ENCODE measurements at regions of chr9 and their contacts with region 1.

Region 1: GRCh38 chr9:78601957-78602565 is 305.1 kb downstream of the PSAT1 start:
- DNase-seq: peak; percentile 66
- ATAC-seq: peak; percentile 81
- H3K4me3 ChIP-seq: no peak overlapping the region
- H3K27ac ChIP-seq: no peak overlapping the region
- H3K4me1 ChIP-seq: peaks cover 6% of the 10 kb centered on the region
- H3K27me3 ChIP-seq: no peaks in the 10 kb centered on the region
- CTCF ChIP-seq: peak; percentile 79
- POLR2A ChIP-seq: no peak
- RAD21 ChIP-seq: peak; percentile 86

Region 2: GRCh38 chr9:78439190-78439865 is 162.7 kb before region 1 on chr9:
- CTCF ChIA-PET with region 1: interaction called, 4 read pairs
- POLR2A ChIA-PET with region 1: no interaction called
- dilution Hi-C with region 1: no loop called
- in situ Hi-C with region 1: no loop called
- intact Hi-C with region 1: loop called (anchors 1 kb)
- DNase-seq: peak; percentile 89
- ATAC-seq: peak; percentile 97
- H3K4me3 ChIP-seq: peak overlapping the region; percentile 5; the same call in 1 of the 2 replicates
- H3K27ac ChIP-seq: no peak overlapping the region
- H3K4me1 ChIP-seq: no peaks in the 10 kb centered on the region
- H3K27me3 ChIP-seq: peaks cover 14% of the 10 kb centered on the region
- CTCF ChIP-seq: peak; percentile 95
- POLR2A ChIP-seq: peak; percentile 30; the same call in 1 of the 2 replicates
- RAD21 ChIP-seq: peak; percentile 97

Region 3: GRCh38 chr9:78866207-78867132 is 264.4 kb after region 1 on chr9:
- CTCF ChIA-PET with region 1: no interaction called
- POLR2A ChIA-PET with region 1: no interaction called
- dilution Hi-C with region 1: no loop called
- in situ Hi-C with region 1: no loop called
- intact Hi-C with region 1: loop called (anchors 5 kb)
- DNase-seq: peak; percentile 96
- ATAC-seq: peak; percentile 85
- H3K4me3 ChIP-seq: no peak overlapping the region
- H3K27ac ChIP-seq: peak overlapping the region; percentile 27
- H3K4me1 ChIP-seq: peaks cover 7% of the 10 kb centered on the region
- H3K27me3 ChIP-seq: no peaks in the 10 kb centered on the region
- CTCF ChIP-seq: no peak
- POLR2A ChIP-seq: no peak
- RAD21 ChIP-seq: no peak

Region 4: GRCh38 chr9:79195879-79196278 is 593.8 kb after region 1 on chr9:
- CTCF ChIA-PET with region 1: no interaction called
- POLR2A ChIA-PET with region 1: no interaction called
- dilution Hi-C with region 1: no loop called
- in situ Hi-C with region 1: no loop called
- intact Hi-C with region 1: loop called (anchors 5 kb)
- DNase-seq: peak; percentile 96
- ATAC-seq: peak; percentile 45
- H3K4me3 ChIP-seq: no peak overlapping the region
- H3K27ac ChIP-seq: no peak overlapping the region
- H3K4me1 ChIP-seq: peaks cover 11% of the 10 kb centered on the region
- H3K27me3 ChIP-seq: no peaks in the 10 kb centered on the region
- CTCF ChIP-seq: no peak
- POLR2A ChIP-seq: no peak
- RAD21 ChIP-seq: no peak

Region 5: GRCh38 chr9:79233542-79233941 is 631.5 kb after region 1 on chr9:
- CTCF ChIA-PET with region 1: no interaction called
- POLR2A ChIA-PET with region 1: no interaction called
- dilution Hi-C with region 1: no loop called
- in situ Hi-C with region 1: no loop called
- intact Hi-C with region 1: loop called (anchors 2 kb)
- DNase-seq: peak; percentile 27
- ATAC-seq: no peak
- H3K4me3 ChIP-seq: no peak overlapping the region
- H3K27ac ChIP-seq: no peak overlapping the region
- H3K4me1 ChIP-seq: no peaks in the 10 kb centered on the region
- H3K27me3 ChIP-seq: no peaks in the 10 kb centered on the region
- CTCF ChIP-seq: peak; percentile 47
- POLR2A ChIP-seq: no peak
- RAD21 ChIP-seq: peak; percentile 38

Measured in IMR-90 (cell line).